Activated naive CD4-positive, alpha-beta T cell treated with anti-CD3 and anti-CD28 coated beads for 36 hours (primary cell): ENCODE measurements at regions of chr20 and their contacts with region 1.

Region 1: DNA sequence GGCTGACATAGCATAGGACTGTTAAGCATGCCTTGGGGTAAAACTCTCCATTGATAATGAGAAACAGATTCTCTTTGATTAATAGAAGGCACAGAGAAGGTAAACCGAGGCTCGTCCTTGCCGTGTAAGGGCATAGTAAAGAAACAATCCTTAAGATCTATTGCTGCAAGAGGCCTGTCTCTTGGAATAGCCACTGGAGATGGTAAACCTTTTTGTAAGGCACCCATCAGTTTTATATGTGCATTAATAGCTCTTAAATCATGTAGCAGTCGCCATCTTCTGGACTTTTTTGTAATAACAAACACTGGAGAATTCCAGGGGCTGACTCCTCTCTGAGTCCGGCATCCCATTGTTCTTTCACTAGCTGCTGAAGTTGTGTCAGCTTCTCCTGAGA is 8.4 kb upstream of the ABHD12 start:
- DNase-seq: peak; percentile 44
- H3K4me3 Mint-ChIP-seq: no peak overlapping the region
- H3K27ac Mint-ChIP-seq: no peak overlapping the region
- H3K4me1 Mint-ChIP-seq: no peaks in the 10 kb centered on the region
- H3K27me3 Mint-ChIP-seq: no peaks in the 10 kb centered on the region

Region 2: GRCh38 chr20:25294459-25295385 is 104.3 kb before region 1 on chr20:
- CTCF ChIA-PET with region 1: interaction called, 49 read pairs
- intact Hi-C with region 1: loop called (anchors 1 kb)
- DNase-seq: peak; percentile 70
- H3K4me3 Mint-ChIP-seq: no peak overlapping the region
- H3K27ac Mint-ChIP-seq: peak overlapping the region; percentile 11
- H3K4me1 Mint-ChIP-seq: no peaks in the 10 kb centered on the region
- H3K27me3 Mint-ChIP-seq: no peaks in the 10 kb centered on the region

Region 3: GRCh38 chr20:25299806-25300205 is 99.2 kb before region 1 on chr20:
- CTCF ChIA-PET with region 1: interaction called, 49 read pairs
- intact Hi-C with region 1: no loop called
- DNase-seq: no peak
- H3K4me3 Mint-ChIP-seq: no peak overlapping the region
- H3K27ac Mint-ChIP-seq: peak overlapping the region; percentile 39
- H3K4me1 Mint-ChIP-seq: no peaks in the 10 kb centered on the region
- H3K27me3 Mint-ChIP-seq: no peaks in the 10 kb centered on the region

Region 4: DNA sequence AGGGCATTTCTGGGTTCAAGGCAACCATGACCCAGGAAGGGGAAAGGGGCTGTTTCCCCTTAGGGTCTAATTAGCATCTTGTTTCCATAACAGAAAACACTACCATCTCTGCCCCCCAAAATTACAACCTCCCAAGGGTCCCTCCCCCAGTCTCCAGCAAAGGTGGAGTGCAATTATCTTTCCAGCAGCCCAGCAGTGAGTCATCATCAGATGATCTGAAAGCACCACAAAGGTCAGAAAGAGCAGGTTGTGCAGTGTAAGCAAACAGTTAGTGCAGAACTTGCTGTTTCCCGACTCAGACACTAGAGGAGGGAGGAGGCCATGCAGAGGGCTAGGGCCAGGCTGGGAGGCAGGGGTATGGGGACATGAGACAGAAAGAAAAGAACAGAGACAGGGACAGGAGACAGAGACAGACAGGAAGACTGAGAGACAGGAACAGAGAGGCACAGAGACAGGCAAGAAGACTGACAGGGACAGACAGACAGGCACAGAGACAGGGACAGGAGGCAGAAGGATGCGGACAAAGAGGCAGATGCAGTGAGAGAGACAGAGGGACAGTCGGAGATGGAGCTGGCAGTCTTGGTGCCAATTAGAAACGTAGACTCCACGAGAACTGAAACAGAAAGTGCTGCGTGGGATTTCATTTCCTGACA is 88.6 kb before region 1 on chr20:
- CTCF ChIA-PET with region 1: interaction called, 25 read pairs
- intact Hi-C with region 1: loop called (anchors 1 kb)
- DNase-seq: peak; percentile 81
- H3K4me3 Mint-ChIP-seq: peak overlapping the region; percentile 56
- H3K27ac Mint-ChIP-seq: peak overlapping the region; percentile 76
- H3K4me1 Mint-ChIP-seq: peaks cover 31% of the 10 kb centered on the region
- H3K27me3 Mint-ChIP-seq: no peaks in the 10 kb centered on the region